Right ventricle myocardium inferior (tissue), 1 donor: ENCODE measurements at regions of chr18 and their contacts with region 1.

Region 1: DNA sequence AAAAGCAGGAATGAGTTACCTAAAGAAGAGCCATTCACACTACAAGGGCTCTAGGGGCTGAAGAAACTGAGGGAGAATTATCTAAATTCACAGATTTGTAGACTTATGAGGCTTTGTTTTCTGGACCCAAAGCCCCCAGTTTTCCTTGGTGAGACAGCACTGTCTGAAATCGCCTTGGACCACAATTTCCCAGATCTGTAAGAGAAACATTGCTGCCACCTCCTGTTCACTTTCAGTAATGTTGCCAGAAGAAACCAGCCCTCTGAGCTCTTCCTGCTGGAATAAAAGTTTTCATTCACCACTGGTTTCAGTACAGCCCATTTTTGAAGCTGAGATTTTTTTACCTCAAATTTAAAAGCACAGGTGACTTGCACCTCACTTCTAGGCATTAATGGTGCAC is 169.2 kb downstream of the CDH20 start:
- DNase-seq: no peak
- ATAC-seq: no peak

Region 2: GRCh38 chr18:60684843-60685513 is 817.5 kb before region 1 on chr18:
- intact Hi-C with region 1: loop called (anchors 2 kb)
- DNase-seq: no peak
- ATAC-seq: no peak

Region 3: DNA sequence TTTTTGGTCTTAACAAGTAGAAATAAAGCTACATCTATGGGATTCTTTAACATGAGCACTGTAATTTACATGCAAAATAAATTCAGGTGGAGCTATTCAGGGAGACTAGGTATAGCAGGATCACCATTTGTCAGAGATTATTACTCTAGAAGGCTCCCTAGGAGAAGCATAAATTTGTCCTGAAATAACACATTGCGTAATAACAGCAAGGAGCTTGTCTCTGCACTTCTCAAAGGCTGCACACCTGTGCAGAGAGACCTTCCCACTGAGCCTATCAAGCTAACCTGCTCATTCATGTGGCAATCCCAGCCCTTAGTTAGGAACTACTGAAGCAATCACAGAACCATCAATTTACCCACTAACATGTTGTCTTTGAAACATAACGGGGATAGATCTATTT is 692.5 kb before region 1 on chr18:
- intact Hi-C with region 1: loop called (anchors 10 kb)
- DNase-seq: no peak
- ATAC-seq: no peak

Region 4: GRCh38 chr18:61085761-61086160 is 416.7 kb before region 1 on chr18:
- intact Hi-C with region 1: loop called (anchors 5 kb)
- DNase-seq: no peak
- ATAC-seq: no peak

Region 5: DNA sequence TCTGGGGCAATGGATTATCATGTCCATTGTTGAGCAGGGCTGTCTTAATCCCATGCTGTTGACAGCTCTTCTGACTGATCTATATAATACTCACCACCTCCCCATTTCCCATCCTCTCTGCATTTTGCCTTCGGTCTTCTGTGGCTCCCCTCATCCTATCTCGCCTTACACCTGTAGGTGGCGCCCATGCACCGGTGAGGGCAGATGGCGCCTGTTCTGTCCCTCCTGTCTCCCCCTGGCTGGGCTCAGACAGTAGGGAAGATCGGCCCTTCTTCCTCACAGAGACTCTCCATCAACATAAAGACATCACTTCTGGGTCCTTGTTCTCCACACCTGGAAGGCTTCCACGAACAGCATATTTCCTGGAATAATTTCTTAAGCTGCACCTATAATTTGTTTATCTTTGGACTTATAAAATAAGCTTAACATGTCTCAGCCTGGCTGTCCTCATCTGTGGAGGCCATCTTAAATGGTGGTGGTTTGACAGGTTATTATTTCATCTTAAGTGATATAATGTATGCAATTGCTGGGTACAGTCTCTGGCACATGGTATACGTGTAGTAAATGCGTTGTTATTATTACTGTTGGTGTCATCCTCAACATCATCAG is 180.1 kb before region 1 on chr18:
- intact Hi-C with region 1: loop called (anchors 2 kb)
- DNase-seq: peak; percentile 75
- ATAC-seq: peak; percentile 68